ENCODE measurements at regions of chr11 and their contacts with region 1.

Region 1: GRCh38 chr11:109946322-109946846 is 146.8 kb upstream of the ZC3H12C start:
- DNase-seq: peak; percentile 71 to 94 (median 82)
- ATAC-seq: peak; percentile 100
- H3K4me3 ChIP-seq: no peak overlapping the region
- H3K4me1 ChIP-seq: peaks cover 7% of the 10 kb centered on the region
- CTCF ChIP-seq: peak; percentile 81

Region 2: DNA sequence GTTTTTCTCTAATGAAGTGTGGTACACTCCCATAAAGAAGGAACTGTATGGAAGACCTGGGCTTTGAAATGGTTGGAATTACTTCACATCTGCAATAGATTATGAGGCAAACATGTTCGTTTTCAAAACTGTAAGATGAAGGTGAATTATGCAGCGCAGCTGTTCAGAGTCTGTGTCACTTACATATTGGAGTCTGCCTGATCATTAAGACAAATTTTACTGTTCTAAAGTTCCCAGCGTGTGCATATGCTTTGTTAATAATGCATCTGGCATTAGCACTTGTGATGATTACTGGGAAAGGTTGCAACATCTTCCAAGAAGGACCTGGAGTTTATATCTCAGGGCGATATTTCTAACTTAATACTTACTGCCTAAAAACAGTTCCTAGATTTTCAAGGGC is 108.4 kb before region 1 on chr11:
- intact Hi-C with region 1: no loop called
- DNase-seq: no peak
- ATAC-seq: no peak
- H3K4me3 ChIP-seq: no peak overlapping the region
- H3K4me1 ChIP-seq: no peaks in the 10 kb centered on the region
- CTCF ChIP-seq: no peak

Region 3: GRCh38 chr11:110092515-110093404 is 146.4 kb after region 1 on chr11 and contains the start of gene ZC3H12C:
- intact Hi-C with region 1: loop called in 1 of 2 experiments (anchors 10 kb)
- DNase-seq: peak; percentile 86 to 88 (median 87)
- ATAC-seq: peak; percentile 89
- H3K4me3 ChIP-seq: peak within 1 kb of the TSS; percentile 71
- H3K4me1 ChIP-seq: peaks cover 9% of the 10 kb centered on the region
- CTCF ChIP-seq: peak; percentile 38
- total RNA-seq, gene ZC3H12C: 15.9 to 28.7 (median 21.5) TPM

Measured in mucosa of descending colon (tissue), 3 donors.